ENCODE measurements at regions of chr13 and their contacts with region 1.

Region 1: DNA sequence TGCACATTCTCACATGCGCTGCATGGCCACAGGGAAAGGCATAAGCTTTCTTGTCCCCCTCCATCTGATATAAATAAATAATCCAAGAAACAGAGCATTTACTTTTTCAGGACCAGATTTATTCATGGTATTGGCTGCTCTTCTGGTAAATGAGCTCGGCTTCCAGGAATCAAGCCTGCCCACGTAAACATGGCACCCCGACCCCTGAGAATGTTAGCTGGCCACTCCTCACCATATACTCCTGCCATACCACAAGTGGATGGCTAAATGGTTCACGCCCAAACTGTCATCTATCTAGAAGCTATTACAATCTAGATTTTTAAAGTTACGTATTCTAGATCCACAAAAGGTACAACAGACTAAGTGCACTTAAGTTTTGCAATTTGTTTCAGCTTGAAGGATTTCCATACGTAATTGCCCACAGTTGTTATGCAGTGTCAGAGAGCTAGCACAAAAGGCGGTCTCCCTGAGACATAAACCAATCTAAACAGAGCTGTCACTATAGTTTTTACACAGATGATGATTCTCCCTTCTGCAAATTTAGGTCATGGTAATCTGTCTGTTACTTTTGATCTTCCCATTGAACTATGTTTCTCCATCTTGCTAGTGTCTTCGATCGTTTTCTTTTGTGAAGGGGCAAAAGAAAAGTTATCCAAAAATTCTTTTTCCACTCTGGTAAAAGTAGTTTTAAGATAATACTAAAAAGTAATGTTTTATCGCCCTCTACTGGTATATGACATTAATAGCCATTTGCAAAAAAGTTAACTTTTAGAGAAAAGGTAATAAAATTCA is 16.2 kb upstream of the FOXO1 start:
- DNase-seq: no peak
- ATAC-seq: no peak

Region 2: GRCh38 chr13:39945226-39945625 is 737.4 kb before region 1 on chr13:
- intact Hi-C with region 1: loop called in 1 of 2 experiments (anchors 5 kb)
- DNase-seq: no peak
- ATAC-seq: peak in 1 of 2 donors; percentile 42

Region 3: DNA sequence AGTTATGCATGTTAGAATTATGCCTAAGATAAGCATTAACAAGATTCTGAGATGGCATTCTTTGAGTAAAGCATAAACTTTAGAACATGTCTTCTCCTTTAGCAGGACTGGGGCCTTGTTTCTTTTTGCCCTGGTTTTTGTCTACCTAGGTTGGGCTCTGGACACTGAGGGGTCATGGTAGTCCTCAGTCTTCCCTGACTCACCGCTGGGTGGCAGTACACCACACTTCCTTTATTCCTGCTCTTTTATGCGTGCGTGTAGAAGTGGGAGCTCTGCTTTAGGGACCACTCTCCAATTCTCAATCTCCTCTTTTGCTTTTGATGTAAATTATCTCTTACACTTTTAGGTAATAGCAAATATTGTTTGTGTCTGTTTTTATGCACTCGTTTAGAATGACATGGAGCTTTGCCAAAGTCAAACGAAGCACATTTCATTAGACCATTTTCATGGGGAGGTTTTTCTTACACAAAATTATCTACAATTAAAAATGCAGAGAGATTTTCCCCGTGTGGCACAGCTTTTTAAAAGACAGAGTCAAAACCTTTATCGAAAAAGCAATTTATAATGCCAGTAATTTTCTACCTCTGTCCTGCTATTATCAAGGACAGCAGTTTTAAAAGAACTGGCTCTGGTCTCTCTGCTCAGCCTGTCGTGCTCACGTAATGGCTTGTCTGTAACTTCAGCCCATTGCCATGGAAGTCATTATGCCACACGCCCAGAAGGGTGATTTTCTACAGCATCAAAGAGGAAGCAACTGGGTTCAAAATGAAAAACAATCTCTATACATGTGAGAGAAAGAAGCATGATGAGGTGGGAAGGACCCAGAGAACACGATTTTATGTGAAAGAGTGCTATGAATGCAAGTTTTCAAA is 613.2 kb before region 1 on chr13:
- intact Hi-C with region 1: loop called (anchors 2 to 10 kb)
- DNase-seq: peak; percentile 81
- ATAC-seq: peak; percentile 92 to 96

Region 4: GRCh38 chr13:40490086-40490758 is 192.4 kb before region 1 on chr13:
- intact Hi-C with region 1: no loop called
- DNase-seq: no peak
- ATAC-seq: no peak

Region 5: DNA sequence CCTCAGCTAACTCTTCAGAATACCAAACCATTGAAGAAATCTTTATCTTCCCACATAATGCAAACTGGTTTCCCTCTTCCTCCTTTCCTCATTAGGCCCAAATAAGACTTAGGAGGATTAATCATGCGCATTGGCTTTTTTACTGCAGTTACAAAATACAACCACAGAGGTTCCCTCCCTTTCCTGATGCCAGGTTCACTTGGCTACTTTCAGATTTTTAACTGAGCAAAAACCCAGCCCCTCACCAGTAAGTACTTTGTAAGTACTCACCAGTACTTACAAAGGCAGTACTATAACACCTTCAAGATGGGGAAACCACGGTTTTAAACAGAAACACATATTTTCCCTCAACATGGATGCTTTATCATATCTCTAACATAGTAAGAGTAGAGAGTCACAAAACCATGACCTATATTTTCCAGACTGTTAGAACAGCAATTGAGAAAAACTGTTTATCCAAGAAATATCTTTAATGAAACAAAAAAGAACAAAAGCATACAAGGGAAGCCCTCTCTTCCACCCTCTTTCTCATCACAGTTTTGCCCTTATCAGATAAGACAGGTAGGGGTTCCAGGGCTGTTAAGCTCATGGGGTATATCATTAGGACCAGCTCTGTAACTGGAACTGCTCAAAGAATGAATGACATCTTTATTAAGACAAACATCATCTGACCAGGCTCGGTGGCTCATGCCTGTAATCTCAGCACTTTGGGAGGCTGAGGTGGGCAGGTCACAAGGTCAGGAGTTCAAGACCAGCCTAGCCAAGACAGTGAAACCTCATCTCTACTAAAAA is 28.9 kb before region 1 on chr13:
- intact Hi-C with region 1: no loop called
- DNase-seq: no peak
- ATAC-seq: peak in 1 of 2 donors; percentile 10

Region 6: GRCh38 chr13:41029629-41030028 is 347.0 kb after region 1 on chr13:
- intact Hi-C with region 1: no loop called
- DNase-seq: no peak
- ATAC-seq: no peak

Region 7: GRCh38 chr13:41502673-41503072 is 820.0 kb after region 1 on chr13:
- intact Hi-C with region 1: no loop called
- DNase-seq: no peak
- ATAC-seq: no peak

Measured in left cardiac atrium (tissue), 4 donors.